SK-N-SH (cell line): ENCODE measurements at regions of chr13 and their contacts with region 1.

Region 1: GRCh38 chr13:25375727-25376358 is 4.1 kb downstream of the ATP8A2 start:
- DNase-seq: peak; percentile 76
- H3K4me3 ChIP-seq: no peak overlapping the region
- H3K27ac ChIP-seq: no peak overlapping the region
- H3K4me1 ChIP-seq: peaks cover 0 to 5% of the 10 kb centered on the region in 2 experiments; a peak in 1 of 4 replicates
- H3K27me3 ChIP-seq: peaks cover 35% of the 10 kb centered on the region
- CTCF ChIP-seq: peak; percentile 76
- EP300 ChIP-seq: no peak
- RAD21 ChIP-seq: peak; percentile 71

Region 2: GRCh38 chr13:25132751-25133390 is 243.0 kb before region 1 on chr13:
- CTCF ChIA-PET with region 1: no interaction called
- POLR2A ChIA-PET with region 1: no interaction called
- DNase-seq: no peak
- H3K4me3 ChIP-seq: no peak overlapping the region
- H3K27ac ChIP-seq: no peak overlapping the region
- H3K4me1 ChIP-seq: no peaks in the 10 kb centered on the region
- H3K27me3 ChIP-seq: no peaks in the 10 kb centered on the region; the same call in 1 of the 2 replicates
- CTCF ChIP-seq: no peak
- EP300 ChIP-seq: no peak
- RAD21 ChIP-seq: no peak

Region 3: DNA sequence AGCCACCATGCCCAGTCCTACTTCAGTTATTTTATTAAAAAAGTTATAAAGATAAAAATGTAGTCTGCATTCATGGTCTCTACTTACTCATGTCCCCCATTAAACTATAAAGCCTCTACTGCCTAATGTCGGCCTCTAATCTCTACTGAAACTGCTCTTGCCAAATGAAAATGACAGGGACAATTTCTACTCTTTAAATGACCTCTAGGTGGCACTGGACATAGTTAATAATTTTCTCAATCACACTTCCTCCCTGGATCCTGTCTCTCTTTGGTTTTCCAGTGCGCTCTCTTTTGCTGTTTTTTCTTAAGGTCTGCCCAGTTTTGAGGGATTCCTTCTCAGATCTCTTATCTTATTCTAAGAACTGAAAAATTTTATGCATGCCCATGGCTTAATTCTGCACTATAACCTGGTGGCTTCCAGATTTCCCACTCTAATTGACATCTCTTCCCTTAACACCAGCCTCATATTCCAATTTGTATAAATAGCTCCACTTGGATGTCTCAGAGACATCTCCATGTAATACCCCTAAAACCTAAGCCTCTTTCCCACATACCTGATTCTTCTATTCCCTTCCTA is 142.8 kb before region 1 on chr13:
- CTCF ChIA-PET with region 1: interaction called, 22 read pairs
- POLR2A ChIA-PET with region 1: no interaction called
- DNase-seq: peak; percentile 55
- H3K4me3 ChIP-seq: no peak overlapping the region
- H3K27ac ChIP-seq: no peak overlapping the region
- H3K4me1 ChIP-seq: no peaks in the 10 kb centered on the region; a peak in 1 of 4 replicates
- H3K27me3 ChIP-seq: peaks cover 15% of the 10 kb centered on the region; the same call in 1 of the 2 replicates
- CTCF ChIP-seq: peak; percentile 68
- EP300 ChIP-seq: no peak
- RAD21 ChIP-seq: peak; percentile 55

Region 4: DNA sequence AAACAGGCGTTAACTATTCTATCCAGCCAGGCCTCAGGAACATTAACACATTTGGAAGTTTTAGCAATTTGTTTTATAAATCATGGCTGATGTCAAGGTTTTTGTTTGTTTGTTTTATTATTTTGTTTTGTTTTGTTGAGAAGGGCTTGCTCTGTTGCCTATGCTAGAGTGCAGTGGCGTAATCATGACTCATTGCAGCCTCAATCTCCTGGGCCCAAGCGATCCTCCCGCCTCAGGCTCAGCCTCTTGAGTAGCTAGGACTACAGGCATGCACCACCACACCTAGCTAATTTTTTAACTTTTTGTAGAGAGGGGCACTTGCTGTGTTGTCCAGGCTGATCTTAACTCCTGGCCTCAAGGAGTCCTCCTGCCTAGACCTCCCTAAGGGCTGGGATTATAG is 46.1 kb before region 1 on chr13:
- CTCF ChIA-PET with region 1: interaction called, 11 read pairs
- POLR2A ChIA-PET with region 1: interaction called, 3 read pairs
- DNase-seq: no peak
- H3K4me3 ChIP-seq: no peak overlapping the region
- H3K27ac ChIP-seq: no peak overlapping the region
- H3K4me1 ChIP-seq: no peaks in the 10 kb centered on the region
- H3K27me3 ChIP-seq: no peaks in the 10 kb centered on the region
- CTCF ChIP-seq: no peak
- EP300 ChIP-seq: no peak
- RAD21 ChIP-seq: no peak

Region 5: GRCh38 chr13:25335856-25336255 is 40.0 kb before region 1 on chr13:
- CTCF ChIA-PET with region 1: interaction called, 15 read pairs
- POLR2A ChIA-PET with region 1: no interaction called
- DNase-seq: no peak
- H3K4me3 ChIP-seq: no peak overlapping the region
- H3K27ac ChIP-seq: peak overlapping the region in 1 of 2 experiments; percentile 19; a peak in 2 of 4 replicates
- H3K4me1 ChIP-seq: no peaks in the 10 kb centered on the region
- H3K27me3 ChIP-seq: no peaks in the 10 kb centered on the region
- CTCF ChIP-seq: no peak
- EP300 ChIP-seq: no peak
- RAD21 ChIP-seq: no peak

Region 6: DNA sequence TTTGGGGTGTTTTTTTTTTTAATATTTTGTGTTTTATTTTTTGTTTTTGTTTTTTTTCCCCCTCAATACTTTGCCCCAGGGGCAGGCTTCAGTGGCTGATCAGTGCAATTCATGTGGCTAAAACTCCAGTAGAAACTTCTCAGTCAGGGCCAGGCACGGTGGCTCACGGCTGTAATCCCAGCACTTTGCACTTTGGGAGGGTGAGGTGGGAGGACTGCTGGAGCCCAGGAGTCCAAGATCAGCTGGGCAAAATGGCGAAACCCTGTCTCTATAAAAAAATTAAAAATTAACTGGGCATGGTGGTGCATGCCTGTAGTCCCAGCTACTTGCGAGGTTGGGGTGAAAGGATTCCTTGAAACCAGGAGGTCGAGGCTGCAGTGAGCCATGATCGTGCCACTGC is 21.5 kb before region 1 on chr13:
- CTCF ChIA-PET with region 1: interaction called, 14 read pairs
- POLR2A ChIA-PET with region 1: no interaction called
- DNase-seq: no peak
- H3K4me3 ChIP-seq: no peak overlapping the region
- H3K27ac ChIP-seq: no peak overlapping the region
- H3K4me1 ChIP-seq: peaks cover 0 to 4% of the 10 kb centered on the region in 2 experiments; a peak in 1 of 4 replicates
- H3K27me3 ChIP-seq: peaks cover 9% of the 10 kb centered on the region; the same call in 1 of the 2 replicates
- CTCF ChIP-seq: no peak
- EP300 ChIP-seq: no peak
- RAD21 ChIP-seq: no peak

Region 7: GRCh38 chr13:25365720-25366235 is 10.1 kb before region 1 on chr13:
- CTCF ChIA-PET with region 1: interaction called, 12 read pairs
- POLR2A ChIA-PET with region 1: no interaction called
- DNase-seq: no peak
- H3K4me3 ChIP-seq: no peak overlapping the region
- H3K27ac ChIP-seq: no peak overlapping the region
- H3K4me1 ChIP-seq: no peaks in the 10 kb centered on the region
- H3K27me3 ChIP-seq: peaks cover 19% of the 10 kb centered on the region
- CTCF ChIP-seq: no peak
- EP300 ChIP-seq: no peak
- RAD21 ChIP-seq: no peak

Region 8: DNA sequence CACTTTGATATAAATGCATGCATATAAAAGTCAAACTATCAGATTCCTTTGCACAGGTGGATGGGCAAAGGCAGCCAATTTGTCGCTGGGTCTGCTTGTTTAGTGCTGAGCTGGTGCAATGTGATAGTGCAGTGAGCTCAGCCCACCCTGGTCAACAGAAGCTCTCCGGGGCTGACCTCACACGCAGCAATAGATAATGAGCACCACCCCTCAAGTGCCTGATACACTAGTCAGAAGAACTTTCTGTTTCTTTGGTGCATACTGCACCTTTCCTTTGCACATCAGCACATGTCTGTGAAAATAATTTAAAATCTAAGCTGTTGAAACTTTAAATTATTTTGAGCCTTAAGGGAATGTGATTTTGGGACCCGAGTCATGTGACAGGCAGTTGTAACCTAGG is 16.1 kb after region 1 on chr13:
- CTCF ChIA-PET with region 1: interaction called, 15 read pairs
- POLR2A ChIA-PET with region 1: no interaction called
- DNase-seq: no peak
- H3K4me3 ChIP-seq: no peak overlapping the region
- H3K27ac ChIP-seq: no peak overlapping the region
- H3K4me1 ChIP-seq: no peaks in the 10 kb centered on the region
- H3K27me3 ChIP-seq: no peaks in the 10 kb centered on the region; the same call in 1 of the 2 replicates
- CTCF ChIP-seq: no peak
- EP300 ChIP-seq: no peak
- RAD21 ChIP-seq: no peak

Region 9: GRCh38 chr13:25836574-25837336 is 460.9 kb after region 1 on chr13:
- CTCF ChIA-PET with region 1: no interaction called
- POLR2A ChIA-PET with region 1: no interaction called
- DNase-seq: no peak
- H3K4me3 ChIP-seq: no peak overlapping the region
- H3K27ac ChIP-seq: no peak overlapping the region
- H3K4me1 ChIP-seq: no peaks in the 10 kb centered on the region; a peak in 1 of 4 replicates
- H3K27me3 ChIP-seq: no peaks in the 10 kb centered on the region
- CTCF ChIP-seq: no peak
- EP300 ChIP-seq: no peak
- RAD21 ChIP-seq: no peak